Body of pancreas (tissue), 4 donors: ENCODE measurements at regions of chr10 and their contacts with region 1.

Region 1: GRCh38 chr10:87850742-87851205 is 12.6 kb downstream of the KLLN start:
- DNase-seq: peak; percentile 73 to 83 (median 79)
- ATAC-seq: peak; percentile 90
- H3K4me3 ChIP-seq: no peak overlapping the region
- H3K27ac ChIP-seq: peak overlapping the region in 1 of 4 donors; percentile 5
- H3K4me1 ChIP-seq: peaks cover 8% of the 10 kb centered on the region
- H3K27me3 ChIP-seq: no peaks in the 10 kb centered on the region
- CTCF ChIP-seq: peak; percentile 53 to 86 (median 83)
- POLR2A ChIP-seq: no peak

Region 2: DNA sequence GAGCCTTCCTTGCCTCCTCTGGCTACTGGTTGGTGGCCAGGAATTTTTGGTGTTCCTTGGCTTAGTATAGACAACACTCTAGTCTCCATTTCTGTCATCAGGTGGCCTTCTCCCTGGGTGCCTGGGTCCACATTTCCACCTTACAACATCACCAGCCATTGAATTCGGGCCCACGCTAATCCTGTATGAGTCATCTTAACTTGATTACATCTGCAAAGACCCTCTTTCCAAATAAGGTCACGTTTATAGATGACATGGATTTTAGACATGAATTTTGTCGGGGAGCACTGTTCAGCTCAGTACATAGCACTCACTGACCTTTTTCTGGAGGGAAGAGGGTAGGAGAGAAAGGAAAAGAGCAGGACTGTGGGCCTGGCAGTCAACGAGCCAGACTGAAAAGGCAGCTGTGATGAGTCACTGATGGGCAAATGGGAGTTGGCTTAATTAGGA is 932.7 kb before region 1 on chr10:
- intact Hi-C with region 1: no loop called
- DNase-seq: no peak
- ATAC-seq: no peak
- H3K4me3 ChIP-seq: no peak overlapping the region
- H3K27ac ChIP-seq: no peak overlapping the region
- H3K4me1 ChIP-seq: peaks cover 10% of the 10 kb centered on the region
- H3K27me3 ChIP-seq: no peaks in the 10 kb centered on the region
- CTCF ChIP-seq: no peak
- POLR2A ChIP-seq: no peak

Region 3: GRCh38 chr10:87734987-87735827 is 115.6 kb before region 1 on chr10:
- intact Hi-C with region 1: no loop called
- DNase-seq: peak; percentile 18 to 38 (median 26)
- ATAC-seq: peak; percentile 80
- H3K4me3 ChIP-seq: no peak overlapping the region
- H3K27ac ChIP-seq: no peak overlapping the region
- H3K4me1 ChIP-seq: peaks cover 15% of the 10 kb centered on the region
- H3K27me3 ChIP-seq: no peaks in the 10 kb centered on the region
- CTCF ChIP-seq: peak; percentile 49 to 90 (median 82)
- POLR2A ChIP-seq: no peak

Region 4: DNA sequence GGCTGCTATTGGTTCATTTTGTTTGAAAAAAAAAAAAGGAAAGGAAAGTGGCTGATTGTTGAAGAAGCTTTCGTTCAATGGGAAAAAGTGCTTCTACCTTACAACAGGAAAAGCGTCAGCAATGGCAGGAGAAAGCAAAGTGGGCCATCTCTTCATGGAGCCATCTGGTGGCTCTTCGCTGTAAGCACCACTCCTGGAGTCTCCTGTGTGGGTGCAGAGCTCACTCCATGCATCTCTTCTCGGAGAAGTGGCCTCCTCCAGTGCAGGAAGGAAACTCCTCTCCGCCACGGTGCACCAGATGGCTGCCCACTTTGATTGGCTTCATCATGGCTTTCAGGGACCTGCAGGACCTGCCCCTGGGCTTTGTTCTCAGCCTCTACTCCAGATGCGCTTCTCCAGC is 263.6 kb after region 1 on chr10:
- intact Hi-C with region 1: loop called (anchors 10 kb)
- DNase-seq: peak; percentile 69 to 78 (median 76)
- ATAC-seq: peak; percentile 90
- H3K4me3 ChIP-seq: no peak overlapping the region
- H3K27ac ChIP-seq: no peak overlapping the region
- H3K4me1 ChIP-seq: peaks cover 10% of the 10 kb centered on the region
- H3K27me3 ChIP-seq: no peaks in the 10 kb centered on the region
- CTCF ChIP-seq: peak; percentile 57 to 78 (median 76)
- POLR2A ChIP-seq: no peak

Region 5: GRCh38 chr10:88386821-88387773 is 536.3 kb after region 1 on chr10:
- intact Hi-C with region 1: loop called (anchors 10 kb)
- DNase-seq: peak; percentile 37 to 80 (median 52)
- ATAC-seq: peak; percentile 87
- H3K4me3 ChIP-seq: no peak overlapping the region
- H3K27ac ChIP-seq: peak overlapping the region; percentile 61 to 89 (median 76)
- H3K4me1 ChIP-seq: peaks cover 56% of the 10 kb centered on the region
- H3K27me3 ChIP-seq: no peaks in the 10 kb centered on the region
- CTCF ChIP-seq: peak in 1 of 7 experiments; percentile 0
- POLR2A ChIP-seq: peak in 2 of 3 donors; percentile 39 to 62

Region 6: GRCh38 chr10:88553116-88553752 is 702.5 kb after region 1 on chr10:
- intact Hi-C with region 1: loop called (anchors 10 kb)
- DNase-seq: peak; percentile 43 to 72 (median 50)
- ATAC-seq: peak; percentile 90
- H3K4me3 ChIP-seq: no peak overlapping the region
- H3K27ac ChIP-seq: no peak overlapping the region
- H3K4me1 ChIP-seq: no peaks in the 10 kb centered on the region
- H3K27me3 ChIP-seq: no peaks in the 10 kb centered on the region
- CTCF ChIP-seq: peak; percentile 49 to 83 (median 72)
- POLR2A ChIP-seq: no peak